H1 (cell line): ENCODE measurements at regions of chr3 and their contacts with region 1.

Region 1: GRCh38 chr3:45210308-45211041 is 15.6 kb downstream of the TMEM158 start:
- DNase-seq: peak; percentile 46 to 89
- H3K4me3 ChIP-seq: no peak overlapping the region
- H3K27ac ChIP-seq: no peak overlapping the region
- H3K4me1 ChIP-seq: peaks cover 0 to 3% (median 0%) of the 10 kb centered on the region in 4 experiments; a peak in 1 of 7 replicates
- H3K27me3 ChIP-seq: no peaks in the 10 kb centered on the region
- CTCF ChIP-seq: peak; percentile 80 to 90 (median 81)
- EP300 ChIP-seq: no peak
- POLR2A ChIP-seq: no peak
- RAD21 ChIP-seq: peak; percentile 80 to 83

Region 2: DNA sequence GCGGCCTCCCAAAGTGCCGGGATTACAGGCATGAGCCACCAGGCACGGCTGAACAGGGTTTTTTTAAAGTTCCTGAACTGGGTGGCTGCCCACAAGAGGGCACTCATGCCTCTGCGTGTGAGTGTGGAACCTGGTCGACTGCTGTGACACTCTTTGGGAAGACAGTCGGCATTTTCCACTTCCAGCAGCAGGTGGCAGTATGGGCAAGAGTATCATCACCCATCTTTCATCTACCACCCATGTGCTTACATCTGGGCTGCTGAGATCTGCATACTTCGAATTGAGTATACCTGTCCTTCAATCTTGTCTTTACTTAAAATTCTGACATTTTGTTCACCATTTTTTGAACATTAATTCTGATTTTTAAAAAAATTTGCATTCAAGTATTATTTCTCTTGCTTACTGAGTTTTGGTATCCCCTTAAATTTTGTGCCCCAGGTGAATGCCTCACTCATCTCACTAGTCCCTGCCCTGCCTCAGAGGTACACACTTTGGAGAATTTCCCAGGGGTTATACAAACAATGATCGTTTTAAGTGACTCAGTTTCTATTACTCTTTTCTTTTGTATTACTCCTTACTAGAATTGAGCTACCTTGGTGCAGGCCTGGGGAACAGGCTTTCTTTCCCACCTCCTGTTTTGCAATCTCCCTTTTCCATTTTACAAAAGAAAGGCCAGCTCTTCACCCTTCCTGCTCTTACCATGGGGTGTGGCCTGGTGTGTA is 172.6 kb before region 1 on chr3:
- CTCF ChIA-PET with region 1: interaction called, 206 read pairs
- POLR2A ChIA-PET with region 1: interaction called, 3 read pairs
- DNase-seq: peak; percentile 88 to 92
- H3K4me3 ChIP-seq: peak overlapping the region in 1 of 4 experiments; percentile 13; a peak in 1 of 8 replicates
- H3K27ac ChIP-seq: no peak overlapping the region
- H3K4me1 ChIP-seq: peaks cover 2 to 6% (median 4%) of the 10 kb centered on the region in 4 experiments
- H3K27me3 ChIP-seq: peaks cover 16 to 37% (median 33%) of the 10 kb centered on the region in 4 experiments
- CTCF ChIP-seq: peak; percentile 89 to 99 (median 99)
- EP300 ChIP-seq: no peak
- POLR2A ChIP-seq: no peak
- RAD21 ChIP-seq: peak; percentile 95 to 96

Region 3: GRCh38 chr3:45055411-45056143 is 154.9 kb before region 1 on chr3:
- CTCF ChIA-PET with region 1: interaction called, 13 read pairs
- POLR2A ChIA-PET with region 1: no interaction called
- DNase-seq: no peak
- H3K4me3 ChIP-seq: no peak overlapping the region
- H3K27ac ChIP-seq: no peak overlapping the region
- H3K4me1 ChIP-seq: peaks cover under 1 to 6% (median 2%) of the 10 kb centered on the region in 4 experiments; a peak in 5 of 7 replicates
- H3K27me3 ChIP-seq: peaks cover 10 to 40% (median 35%) of the 10 kb centered on the region in 4 experiments
- CTCF ChIP-seq: peak; percentile 51 to 60 (median 58)
- EP300 ChIP-seq: no peak
- POLR2A ChIP-seq: no peak
- RAD21 ChIP-seq: peak; percentile 59 to 72

Region 4: GRCh38 chr3:45182915-45183867 is 27.3 kb before region 1 on chr3:
- CTCF ChIA-PET with region 1: interaction called, 11 read pairs
- POLR2A ChIA-PET with region 1: no interaction called
- DNase-seq: peak in 1 of 2 experiments; percentile 61
- H3K4me3 ChIP-seq: no peak overlapping the region
- H3K27ac ChIP-seq: no peak overlapping the region
- H3K4me1 ChIP-seq: peaks cover 0 to 6% (median 4%) of the 10 kb centered on the region in 4 experiments; a peak in 5 of 7 replicates
- H3K27me3 ChIP-seq: no peaks in the 10 kb centered on the region; a peak in 2 of 7 replicates
- CTCF ChIP-seq: no peak
- EP300 ChIP-seq: no peak
- POLR2A ChIP-seq: no peak
- RAD21 ChIP-seq: no peak

Region 5: DNA sequence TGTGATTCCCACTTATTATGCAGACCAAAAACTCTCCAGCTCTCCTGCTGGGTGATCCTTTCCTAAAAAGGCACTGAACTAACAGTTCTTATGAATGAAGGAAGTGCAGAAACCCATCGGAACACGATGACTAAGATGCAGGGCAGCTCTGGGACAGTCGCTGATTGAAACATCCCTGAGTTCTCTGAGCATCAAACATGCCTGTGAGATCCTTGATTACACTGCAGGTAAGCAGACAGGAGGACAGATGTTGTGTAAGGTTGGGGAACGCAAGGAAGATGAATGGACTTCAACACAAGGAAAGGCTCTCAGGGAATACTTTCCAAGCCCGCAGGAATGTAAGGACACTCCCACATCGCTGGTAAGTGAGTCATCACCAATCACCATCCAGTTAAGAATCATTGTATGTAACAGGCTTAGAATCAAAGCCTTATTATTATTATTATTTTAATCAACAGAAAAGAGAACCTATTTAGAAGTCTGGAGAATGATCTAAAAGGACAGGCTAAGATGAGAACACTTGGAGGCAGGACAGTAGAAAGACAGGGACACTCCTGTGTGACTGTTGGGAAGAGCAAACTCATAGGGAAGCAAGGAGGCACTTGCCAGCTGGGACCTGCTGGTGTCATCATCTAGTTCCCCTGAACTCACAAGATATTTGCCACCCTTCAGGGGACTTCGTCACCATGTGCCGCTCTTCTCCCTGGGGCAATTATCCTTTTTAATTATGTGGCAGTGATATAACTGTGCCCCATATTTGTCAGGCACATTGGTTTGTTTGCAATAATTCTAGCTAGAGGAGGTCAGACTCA is 10.4 kb before region 1 on chr3:
- CTCF ChIA-PET with region 1: interaction called, 35 read pairs
- POLR2A ChIA-PET with region 1: no interaction called
- DNase-seq: no peak
- H3K4me3 ChIP-seq: no peak overlapping the region
- H3K27ac ChIP-seq: no peak overlapping the region
- H3K4me1 ChIP-seq: peaks cover 0 to 4% (median 3%) of the 10 kb centered on the region in 4 experiments; a peak in 3 of 7 replicates
- H3K27me3 ChIP-seq: no peaks in the 10 kb centered on the region
- CTCF ChIP-seq: no peak
- EP300 ChIP-seq: no peak
- POLR2A ChIP-seq: no peak
- RAD21 ChIP-seq: no peak

Region 6: DNA sequence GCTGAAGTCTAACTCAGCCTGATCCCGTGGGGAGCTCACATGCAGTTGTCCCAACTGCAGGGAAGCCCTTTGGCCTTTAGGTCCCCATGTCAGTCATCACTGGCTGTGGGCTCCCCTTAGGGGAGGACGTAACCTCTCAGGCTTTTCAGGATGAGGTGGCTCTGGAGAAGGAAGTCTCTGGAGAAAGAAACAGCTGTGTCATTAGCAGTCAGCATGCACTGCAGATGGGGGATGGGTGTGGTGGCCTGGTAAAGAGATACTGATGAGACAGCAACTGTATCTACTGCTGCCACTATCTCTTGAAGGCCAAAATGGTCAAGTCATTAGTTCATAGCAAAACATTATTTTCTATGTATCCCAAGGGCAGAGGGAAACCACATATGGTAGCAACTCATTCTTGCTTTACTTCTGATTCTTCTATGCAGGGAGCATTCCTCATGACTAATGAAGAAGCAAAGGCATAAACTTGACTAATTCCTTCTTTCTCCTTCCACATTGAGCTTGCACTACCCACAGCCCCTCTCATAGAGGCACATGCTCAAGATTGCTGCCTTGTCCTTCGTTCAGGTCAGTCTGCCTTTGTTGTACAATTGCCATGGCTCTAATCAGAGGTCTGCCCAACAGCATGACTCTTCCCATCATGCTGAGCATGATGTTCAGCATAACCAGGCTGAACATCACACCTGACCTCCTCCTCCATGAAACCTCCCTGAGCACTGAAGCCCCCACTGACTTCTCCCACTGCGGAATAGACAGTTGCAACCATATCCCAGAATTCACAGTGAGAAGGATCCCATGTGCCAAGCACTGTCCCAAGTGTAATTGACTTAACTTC is 63.4 kb after region 1 on chr3:
- CTCF ChIA-PET with region 1: no interaction called
- POLR2A ChIA-PET with region 1: no interaction called
- DNase-seq: no peak
- H3K4me3 ChIP-seq: no peak overlapping the region
- H3K27ac ChIP-seq: no peak overlapping the region
- H3K4me1 ChIP-seq: peaks cover 0 to 11% (median 6%) of the 10 kb centered on the region in 4 experiments; a peak in 5 of 7 replicates
- H3K27me3 ChIP-seq: peaks cover 0 to 4% (median 0%) of the 10 kb centered on the region in 4 experiments; a peak in 1 of 7 replicates
- CTCF ChIP-seq: no peak
- EP300 ChIP-seq: no peak
- POLR2A ChIP-seq: no peak
- RAD21 ChIP-seq: no peak